Colonic mucosa (tissue), 4 donors: ENCODE measurements at regions of chrX and their contacts with region 1.

Region 1: GRCh38 chrX:109934434-109934833 is 68.5 kb upstream of the TMEM164 start:
- DNase-seq: no peak
- H3K4me3 ChIP-seq: no peak overlapping the region
- H3K27ac ChIP-seq: no peak overlapping the region
- H3K4me1 ChIP-seq: no peaks in the 10 kb centered on the region
- H3K27me3 ChIP-seq: peaks cover 6% of the 10 kb centered on the region
- CTCF ChIP-seq: no peak

Region 2: DNA sequence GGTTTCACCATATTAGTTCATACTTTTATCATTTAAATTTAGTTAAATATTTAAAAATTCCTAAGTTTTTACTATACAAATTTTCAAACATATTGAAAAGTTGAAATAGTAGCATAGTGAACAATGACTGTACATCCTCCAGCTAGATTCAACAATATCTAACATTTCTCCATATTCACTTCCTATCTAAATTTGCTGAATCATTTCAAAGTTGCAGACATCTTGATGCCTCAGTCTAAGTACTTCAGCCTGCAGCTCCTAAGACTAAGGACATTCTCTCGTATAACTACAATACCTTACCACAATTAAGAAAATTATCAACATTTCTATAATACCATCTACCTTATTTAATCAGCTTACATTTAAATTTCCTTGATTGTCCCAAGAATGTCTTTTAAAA is 201.2 kb after region 1 on chrX:
- intact Hi-C with region 1: loop called (anchors 5 kb)
- DNase-seq: no peak
- H3K4me3 ChIP-seq: no peak overlapping the region
- H3K27ac ChIP-seq: no peak overlapping the region
- H3K4me1 ChIP-seq: no peaks in the 10 kb centered on the region
- H3K27me3 ChIP-seq: no peaks in the 10 kb centered on the region
- CTCF ChIP-seq: no peak